AG04449 (cell line): ENCODE measurements at regions of chr22 and their contacts with region 1.

Region 1: DNA sequence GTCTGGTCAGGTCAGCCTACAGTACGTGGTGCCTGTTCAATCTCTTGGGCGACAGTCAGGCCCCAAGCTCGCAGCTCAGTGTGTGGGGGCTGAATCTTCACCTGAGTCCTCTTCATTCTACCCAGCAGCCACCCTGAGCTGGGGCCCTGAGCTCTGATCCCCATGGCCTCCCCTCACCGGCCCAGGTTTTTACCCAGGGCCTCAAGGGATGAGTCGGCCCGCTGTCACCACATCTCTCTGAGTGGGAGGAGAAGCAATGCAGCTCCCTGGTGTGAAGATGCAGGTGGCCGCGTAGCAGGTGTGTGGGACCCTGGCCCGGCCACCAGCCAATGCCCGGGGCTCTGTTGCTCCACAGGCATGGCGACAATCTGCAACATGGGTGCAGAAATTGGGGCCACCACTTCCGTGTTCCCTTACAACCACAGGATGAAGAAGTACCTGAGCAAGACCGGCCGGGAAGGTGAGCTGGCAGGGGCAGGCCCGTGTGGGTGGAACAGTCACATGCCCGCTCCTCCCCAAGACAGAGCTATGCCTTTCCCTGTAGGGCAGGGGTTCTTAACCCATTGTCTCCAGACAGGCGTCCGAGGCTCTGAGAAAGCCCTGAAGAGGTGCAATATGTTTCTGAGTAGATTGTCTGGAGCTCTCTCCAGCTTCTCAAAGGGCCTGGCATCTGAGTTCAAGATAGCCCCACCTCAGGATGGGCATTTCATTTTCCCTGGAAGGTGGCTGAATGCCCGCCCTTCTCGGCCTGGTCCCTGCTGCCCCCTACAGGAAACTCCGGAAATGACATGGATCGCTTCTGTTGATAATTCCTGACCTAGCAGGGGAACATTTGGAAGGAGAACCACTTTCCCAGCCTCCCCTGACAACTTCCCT is 26.9 kb downstream of the POLR3H start:
- DNase-seq: no peak
- H3K4me3 ChIP-seq: no peak overlapping the region
- CTCF ChIP-seq: peak; percentile 89

Region 2: DNA sequence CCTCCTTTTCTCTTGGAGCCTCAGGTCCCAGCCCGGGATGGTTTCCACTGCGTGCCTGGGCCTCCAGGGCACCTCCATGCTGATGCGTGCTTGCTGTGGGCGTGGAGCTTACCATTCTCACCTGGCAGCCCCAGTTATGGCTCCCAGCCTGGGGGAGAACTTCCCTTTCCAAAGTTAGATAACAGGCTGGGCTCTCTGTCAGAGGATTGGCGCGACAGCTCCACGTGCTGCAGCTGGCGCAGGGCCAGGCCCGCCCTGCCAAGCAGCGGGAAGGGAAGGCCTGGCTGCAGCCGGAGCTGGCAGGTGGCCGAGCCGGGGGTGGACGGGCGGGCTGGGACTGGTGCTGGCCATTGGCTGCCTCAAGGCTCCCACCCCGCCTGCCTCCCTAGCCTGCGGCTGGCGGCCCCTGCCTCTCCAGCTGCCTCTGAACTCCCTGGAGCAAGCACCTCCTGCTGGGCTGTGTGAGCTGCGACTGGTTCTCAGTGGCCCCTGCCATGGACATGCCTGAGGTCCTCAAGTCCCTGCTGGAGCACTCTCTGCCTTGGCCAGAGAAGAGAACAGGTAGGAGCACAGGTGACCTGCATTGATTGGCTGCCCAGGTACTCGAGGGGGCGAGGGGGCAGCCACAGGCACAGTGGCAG is 150.3 kb before region 1 on chr22:
- CTCF ChIA-PET with region 1: interaction called, 12 read pairs
- POLR2A ChIA-PET with region 1: no interaction called
- DNase-seq: peak; percentile 56
- H3K4me3 ChIP-seq: peak overlapping the region; percentile 41
- CTCF ChIP-seq: peak; percentile 48

Region 3: GRCh38 chr22:41436322-41437113 is 80.9 kb before region 1 on chr22:
- CTCF ChIA-PET with region 1: interaction called, 10 read pairs
- POLR2A ChIA-PET with region 1: interaction called, 3 read pairs
- DNase-seq: no peak
- H3K4me3 ChIP-seq: no peak overlapping the region
- CTCF ChIP-seq: no peak

Region 4: DNA sequence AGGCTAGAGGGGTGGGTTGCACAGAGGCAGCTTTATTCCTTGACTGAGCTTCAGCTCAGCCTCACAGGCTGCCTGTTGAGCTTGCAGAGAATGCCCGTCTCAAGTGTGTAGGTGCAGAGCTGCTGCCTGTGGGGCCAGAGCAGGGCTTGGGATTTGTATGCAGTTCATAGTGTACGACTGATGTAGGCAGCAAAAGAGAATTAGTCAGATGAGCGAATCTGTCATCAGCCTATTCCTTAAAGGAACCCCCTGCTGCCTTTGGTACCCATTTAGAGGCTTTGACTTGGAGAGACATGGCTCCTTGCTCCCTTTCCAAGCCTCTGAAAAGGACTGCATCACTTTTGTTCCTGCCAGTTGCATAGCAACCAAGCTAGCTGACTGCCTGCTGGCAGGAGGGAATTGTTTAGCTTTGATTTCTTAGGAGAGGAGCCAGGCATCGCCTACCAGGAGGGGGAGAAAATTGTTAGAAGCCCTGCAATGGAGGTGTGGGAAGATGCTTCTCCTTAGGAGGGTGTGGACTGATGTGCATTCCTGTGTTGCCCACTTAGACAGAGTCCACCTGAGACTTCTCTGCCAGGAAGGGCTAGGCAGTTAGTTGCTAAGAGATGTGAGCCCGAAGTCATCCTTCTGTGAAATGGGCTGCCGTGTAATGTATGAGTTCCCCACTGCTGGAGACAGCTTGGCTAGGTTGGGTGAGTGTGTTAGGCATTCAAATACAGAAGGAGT is 37.6 kb before region 1 on chr22:
- CTCF ChIA-PET with region 1: interaction called, 21 read pairs
- POLR2A ChIA-PET with region 1: interaction called, 3 read pairs
- DNase-seq: no peak
- H3K4me3 ChIP-seq: no peak overlapping the region
- CTCF ChIP-seq: peak; percentile 4

Region 5: GRCh38 chr22:41532908-41533825 is 15.8 kb after region 1 on chr22:
- CTCF ChIA-PET with region 1: interaction called, 74 read pairs
- POLR2A ChIA-PET with region 1: no interaction called
- DNase-seq: no peak
- H3K4me3 ChIP-seq: no peak overlapping the region
- CTCF ChIP-seq: peak; percentile 85

Region 6: DNA sequence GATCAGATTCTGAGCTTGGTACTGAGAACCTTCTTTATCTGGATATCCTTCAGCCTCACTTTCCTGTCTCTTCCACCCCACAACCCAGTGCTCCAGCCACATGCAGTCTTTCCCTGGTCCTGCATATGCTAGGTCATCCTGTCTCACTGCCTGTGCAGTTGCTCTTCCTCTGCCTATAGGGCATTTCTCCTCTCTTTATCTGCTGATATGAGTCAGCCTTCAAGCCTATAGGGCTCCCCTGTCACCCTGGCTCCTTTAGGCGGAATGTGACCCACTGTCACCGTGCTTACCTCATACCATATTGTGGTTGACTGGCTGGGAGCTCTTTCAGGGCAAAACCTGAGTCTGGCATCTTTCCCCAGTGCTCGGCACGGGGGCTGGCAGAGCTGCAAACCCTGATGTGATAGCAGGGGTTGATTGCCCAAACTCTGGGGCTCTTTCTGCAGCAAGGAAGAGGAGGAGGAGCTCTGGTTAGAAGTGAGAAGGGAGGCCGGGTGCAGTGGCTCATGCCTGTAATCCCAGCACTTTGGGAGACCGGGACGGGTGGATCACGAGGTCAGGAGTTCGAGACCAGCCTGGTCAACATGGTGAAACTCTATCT is 208.2 kb after region 1 on chr22:
- CTCF ChIA-PET with region 1: no interaction called
- POLR2A ChIA-PET with region 1: no interaction called
- DNase-seq: no peak
- H3K4me3 ChIP-seq: no peak overlapping the region
- CTCF ChIP-seq: no peak